CD4-positive, alpha-beta T cell (primary cell): ENCODE measurements at regions of chrX and their contacts with region 1.

Region 1: GRCh38 chrX:136588041-136588788 is 56.2 kb downstream of the VGLL1 start:
- DNase-seq: peak in 3 of 14 experiments; percentile 59 to 66 (median 63)
- ATAC-seq: peak; percentile 15
- H3K4me3 ChIP-seq: no peak overlapping the region
- H3K4me3 Mint-ChIP-seq: peak overlapping the region; percentile 7
- H3K27ac ChIP-seq: peak overlapping the region; percentile 59 to 72
- H3K27ac Mint-ChIP-seq: peak overlapping the region; percentile 92
- H3K4me1 ChIP-seq: peaks cover 49% of the 10 kb centered on the region
- H3K4me1 Mint-ChIP-seq: peaks cover 44% of the 10 kb centered on the region
- H3K27me3 ChIP-seq: no peaks in the 10 kb centered on the region
- H3K27me3 Mint-ChIP-seq: no peaks in the 10 kb centered on the region
- CTCF ChIP-seq: no peak

Region 2: DNA sequence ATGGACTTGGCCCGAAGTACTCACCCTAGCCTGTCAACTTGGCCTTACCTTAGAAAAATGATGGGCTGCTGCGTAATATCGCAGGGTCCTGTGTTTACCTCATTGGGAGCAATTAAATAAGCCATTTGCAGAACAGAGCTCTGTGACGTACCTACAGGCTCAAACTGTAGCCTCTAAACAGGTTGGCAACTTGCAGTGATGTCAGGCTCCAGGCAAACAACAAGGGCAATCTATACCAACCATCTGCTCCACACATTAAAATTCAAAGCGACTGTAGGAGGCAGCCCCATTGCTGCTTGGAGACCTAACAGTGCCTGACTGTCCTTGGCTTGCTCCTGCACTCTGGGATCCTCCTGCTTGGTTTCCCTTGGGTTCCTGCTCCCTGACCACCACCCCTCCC is 39.0 kb before region 1 on chrX:
- CTCF ChIA-PET with region 1: no interaction called
- POLR2A ChIA-PET with region 1: no interaction called
- intact Hi-C with region 1: loop called in 1 of 2 experiments (anchors 1 kb)
- DNase-seq: no peak
- ATAC-seq: no peak
- H3K4me3 ChIP-seq: no peak overlapping the region
- H3K4me3 Mint-ChIP-seq: no peak overlapping the region
- H3K27ac ChIP-seq: no peak overlapping the region
- H3K27ac Mint-ChIP-seq: no peak overlapping the region
- H3K4me1 ChIP-seq: peaks cover 35% of the 10 kb centered on the region
- H3K4me1 Mint-ChIP-seq: peaks cover 34% of the 10 kb centered on the region
- H3K27me3 ChIP-seq: no peaks in the 10 kb centered on the region
- H3K27me3 Mint-ChIP-seq: no peaks in the 10 kb centered on the region
- CTCF ChIP-seq: no peak

Region 3: GRCh38 chrX:136577552-136577951 is 10.7 kb before region 1 on chrX:
- CTCF ChIA-PET with region 1: interaction called, 11 read pairs
- POLR2A ChIA-PET with region 1: interaction called, 8 read pairs
- intact Hi-C with region 1: no loop called
- DNase-seq: peak; percentile 45 to 85 (median 62)
- ATAC-seq: peak; percentile 100
- H3K4me3 ChIP-seq: no peak overlapping the region
- H3K4me3 Mint-ChIP-seq: no peak overlapping the region
- H3K27ac ChIP-seq: no peak overlapping the region
- H3K27ac Mint-ChIP-seq: peak overlapping the region; percentile 61
- H3K4me1 ChIP-seq: peaks cover 12% of the 10 kb centered on the region
- H3K4me1 Mint-ChIP-seq: peaks cover 13% of the 10 kb centered on the region
- H3K27me3 ChIP-seq: no peaks in the 10 kb centered on the region
- H3K27me3 Mint-ChIP-seq: no peaks in the 10 kb centered on the region
- CTCF ChIP-seq: peak; percentile 63

Region 4: DNA sequence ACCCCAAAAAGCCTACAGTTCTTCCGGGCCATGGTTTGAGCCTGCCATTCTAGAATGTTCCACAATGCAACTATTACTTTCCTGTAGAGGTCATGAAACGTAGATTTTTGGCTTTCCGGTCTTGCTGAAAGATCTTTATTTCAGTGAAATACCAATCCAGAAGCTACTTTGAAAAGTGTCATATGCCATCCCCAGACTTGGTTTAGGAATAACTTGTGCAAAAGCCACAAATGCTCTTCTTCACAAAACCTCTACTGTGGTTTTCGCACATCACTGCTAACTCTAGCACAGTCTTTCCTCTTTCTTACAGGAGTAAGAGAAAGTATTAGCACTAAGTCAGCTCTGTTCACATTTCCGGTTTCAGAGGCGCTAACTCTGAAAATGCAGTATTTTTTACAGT is 47.0 kb after region 1 on chrX:
- CTCF ChIA-PET with region 1: no interaction called
- POLR2A ChIA-PET with region 1: interaction called, 6 read pairs
- intact Hi-C with region 1: loop called in 1 of 2 experiments (anchors 5 kb)
- DNase-seq: peak in 4 of 14 experiments; percentile 28 to 76 (median 70)
- ATAC-seq: peak; percentile 80
- H3K4me3 ChIP-seq: peak overlapping the region; percentile 27
- H3K4me3 Mint-ChIP-seq: peak overlapping the region; percentile 58
- H3K27ac ChIP-seq: peak overlapping the region; percentile 39 to 47
- H3K27ac Mint-ChIP-seq: peak overlapping the region; percentile 88
- H3K4me1 ChIP-seq: peaks cover 83% of the 10 kb centered on the region
- H3K4me1 Mint-ChIP-seq: peaks cover 88% of the 10 kb centered on the region
- H3K27me3 ChIP-seq: no peaks in the 10 kb centered on the region
- H3K27me3 Mint-ChIP-seq: no peaks in the 10 kb centered on the region
- CTCF ChIP-seq: no peak

Region 5: GRCh38 chrX:136780763-136781162 is 192.5 kb after region 1 on chrX and contains the start of gene ARHGEF6:
- CTCF ChIA-PET with region 1: no interaction called
- POLR2A ChIA-PET with region 1: no interaction called
- intact Hi-C with region 1: loop called in 1 of 2 experiments (anchors 10 kb)
- DNase-seq: peak in 12 of 14 experiments; percentile 9 to 66 (median 38)
- ATAC-seq: peak; percentile 60
- H3K4me3 ChIP-seq: peak within 1 kb of the TSS; percentile 79
- H3K4me3 Mint-ChIP-seq: peak within 1 kb of the TSS; percentile 98
- H3K27ac ChIP-seq: peak within 1 kb of the TSS; percentile 65 to 84
- H3K27ac Mint-ChIP-seq: peak within 1 kb of the TSS; percentile 95
- H3K4me1 ChIP-seq: peaks cover 29% of the 10 kb centered on the region
- H3K4me1 Mint-ChIP-seq: peaks cover 75% of the 10 kb centered on the region
- H3K27me3 ChIP-seq: no peaks in the 10 kb centered on the region
- H3K27me3 Mint-ChIP-seq: no peaks in the 10 kb centered on the region
- CTCF ChIP-seq: no peak
- total RNA-seq, gene ARHGEF6: 43.3 to 45.3 TPM